Dendritic cell treated with granulocyte-macrophage colony-stimulating factor and Interleukin-4, amounts not matched to agents 40 ng/mL and 50 ng/mL, for 4 days (primary cell): ENCODE measurements at regions of chr5 and their contacts with region 1.

Region 1: GRCh38 chr5:6745706-6746222 is 32.5 kb downstream of the TENT4A start:
- H3K4me3 Mint-ChIP-seq: no peak overlapping the region
- H3K27ac Mint-ChIP-seq: no peak overlapping the region
- H3K4me1 Mint-ChIP-seq: no peaks in the 10 kb centered on the region
- H3K27me3 Mint-ChIP-seq: no peaks in the 10 kb centered on the region

Region 2: DNA sequence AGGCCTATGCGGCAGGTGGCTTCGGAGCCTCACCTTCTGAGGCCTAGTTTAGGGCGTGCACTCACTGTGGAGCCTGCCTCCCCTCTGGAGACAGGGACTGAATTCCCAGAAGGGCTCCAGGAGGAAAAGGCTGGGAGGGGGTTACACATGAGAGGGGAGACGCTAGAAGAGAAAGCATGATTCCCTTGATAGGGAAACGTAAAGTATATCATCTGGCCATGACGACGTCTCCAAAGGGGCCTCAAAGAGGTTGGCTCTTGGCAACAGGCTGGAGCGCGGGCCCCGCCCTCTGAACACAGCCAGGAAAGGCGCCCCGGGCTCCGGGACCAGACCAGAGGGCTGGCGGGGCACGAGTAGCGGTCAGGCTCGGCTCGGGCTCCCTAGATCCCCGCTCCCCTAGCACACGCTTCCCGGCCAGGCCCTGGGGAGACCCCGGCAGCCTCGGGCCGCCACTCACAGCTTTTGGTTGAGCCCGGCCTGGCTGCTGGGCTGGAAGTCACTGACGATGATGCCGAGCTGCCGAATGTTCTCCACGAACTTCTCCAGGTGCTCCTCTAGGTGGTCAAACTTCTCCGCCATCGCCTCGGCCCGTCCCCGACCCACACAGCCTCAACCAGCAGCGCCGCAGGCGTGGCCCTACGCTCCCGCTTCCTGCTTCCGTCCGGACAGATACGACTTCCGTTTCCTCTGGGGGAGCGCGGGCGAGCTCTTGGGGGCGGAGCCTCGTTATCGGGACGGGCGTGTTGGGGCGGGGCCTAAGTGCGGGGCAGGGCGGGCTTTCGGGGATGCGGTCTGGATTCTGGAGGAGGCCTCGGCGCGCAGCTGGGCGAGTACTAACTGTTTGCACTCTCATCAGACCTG is 367.6 kb before region 1 on chr5 and contains the start of gene MED10:
- intact Hi-C with region 1: loop called (anchors 10 kb)
- H3K4me3 Mint-ChIP-seq: peak within 1 kb of the TSS; percentile 92
- H3K27ac Mint-ChIP-seq: peak within 1 kb of the TSS; percentile 91
- H3K4me1 Mint-ChIP-seq: peaks cover 22% of the 10 kb centered on the region
- H3K27me3 Mint-ChIP-seq: peaks cover 5% of the 10 kb centered on the region

Region 3: DNA sequence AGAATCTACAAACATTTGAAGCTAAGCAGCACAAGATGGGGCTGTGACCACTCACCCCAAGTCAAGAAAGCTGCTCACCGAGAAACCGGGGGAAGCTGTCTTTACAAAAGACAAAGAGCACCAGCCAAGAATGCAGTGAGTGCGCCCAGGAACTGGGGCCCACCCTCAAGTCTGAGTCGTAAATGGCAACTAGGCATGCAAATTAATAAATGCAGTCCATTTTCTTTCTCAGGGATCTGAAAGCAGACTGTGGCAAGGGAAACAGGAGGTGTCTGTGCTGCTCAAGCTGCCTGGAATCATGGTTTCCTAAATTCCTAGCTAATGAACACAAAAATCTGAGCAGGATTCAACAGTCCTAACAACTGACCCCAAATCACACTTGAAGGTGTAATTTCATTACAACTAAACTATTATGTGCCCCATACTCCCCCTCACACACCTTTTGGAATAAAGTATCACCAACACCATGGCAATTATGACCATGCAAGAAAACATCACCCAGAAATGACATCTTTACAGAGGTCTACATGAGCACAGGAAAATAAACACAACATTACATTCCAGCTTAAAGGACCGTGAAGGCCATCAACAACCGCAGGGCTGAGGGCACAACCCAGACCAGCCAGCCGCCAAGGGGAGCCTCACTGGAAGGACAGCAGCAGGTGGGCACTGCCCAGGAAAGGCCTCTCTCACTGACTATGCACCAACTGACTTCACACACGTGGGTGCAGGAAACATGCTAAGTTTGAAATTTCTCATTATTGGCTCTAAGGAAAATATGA is 130.5 kb before region 1 on chr5:
- intact Hi-C with region 1: no loop called
- H3K4me3 Mint-ChIP-seq: no peak overlapping the region
- H3K27ac Mint-ChIP-seq: no peak overlapping the region
- H3K4me1 Mint-ChIP-seq: no peaks in the 10 kb centered on the region
- H3K27me3 Mint-ChIP-seq: no peaks in the 10 kb centered on the region

Region 4: GRCh38 chr5:6632917-6633468 is 112.8 kb before region 1 on chr5 and contains the starts of genes NSUN2 and SRD5A1:
- intact Hi-C with region 1: loop called (anchors 2 kb)
- H3K4me3 Mint-ChIP-seq: peak within 1 kb of the TSS; percentile 93
- H3K27ac Mint-ChIP-seq: peak within 1 kb of the TSS; percentile 98
- H3K4me1 Mint-ChIP-seq: peaks cover 40% of the 10 kb centered on the region
- H3K27me3 Mint-ChIP-seq: no peaks in the 10 kb centered on the region

Region 5: DNA sequence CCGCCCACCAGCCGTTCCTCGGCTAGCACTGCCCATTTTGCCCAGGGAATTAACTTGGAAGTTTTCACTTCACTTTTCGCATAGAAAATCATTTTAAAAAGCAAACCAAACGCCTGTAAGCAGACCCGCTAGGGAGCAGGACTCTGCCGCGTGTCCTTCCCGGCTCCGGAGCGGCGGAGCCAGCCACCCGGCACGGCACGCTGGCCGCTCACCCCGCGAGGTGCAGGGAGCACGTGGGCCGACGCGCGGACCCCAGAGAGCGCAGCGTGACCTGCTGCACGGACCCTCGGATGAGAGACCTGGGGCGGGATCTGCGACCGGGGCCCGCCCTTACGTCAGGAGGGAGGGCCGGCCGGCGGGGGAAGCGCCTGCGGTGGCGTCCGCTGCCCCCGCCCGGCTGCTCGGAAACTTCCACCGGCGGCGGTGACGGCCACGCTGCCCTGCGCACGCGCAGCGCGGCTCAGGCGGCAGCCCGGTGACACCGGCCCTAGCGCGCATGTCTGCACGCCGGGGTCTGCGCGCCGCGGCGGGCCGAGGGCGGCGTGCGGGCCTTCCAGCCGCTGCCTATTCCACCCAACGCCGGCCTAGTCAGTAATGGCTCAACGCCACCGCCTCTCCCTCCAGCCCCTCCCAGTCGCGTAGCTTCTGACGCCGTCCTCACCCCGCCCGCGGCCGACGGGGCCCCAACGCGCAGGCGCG is 33.0 kb before region 1 on chr5:
- intact Hi-C with region 1: loop called (anchors 5 kb)
- H3K4me3 Mint-ChIP-seq: peak overlapping the region; percentile 84
- H3K27ac Mint-ChIP-seq: peak overlapping the region; percentile 93
- H3K4me1 Mint-ChIP-seq: peaks cover 42% of the 10 kb centered on the region
- H3K27me3 Mint-ChIP-seq: peaks cover 8% of the 10 kb centered on the region

Region 6: GRCh38 chr5:6820851-6821479 is 75.2 kb after region 1 on chr5:
- intact Hi-C with region 1: no loop called
- H3K4me3 Mint-ChIP-seq: no peak overlapping the region
- H3K27ac Mint-ChIP-seq: no peak overlapping the region
- H3K4me1 Mint-ChIP-seq: no peaks in the 10 kb centered on the region
- H3K27me3 Mint-ChIP-seq: peaks cover 21% of the 10 kb centered on the region